H1 (cell line): ENCODE measurements at regions of chr9 and their contacts with region 1.

Region 1: GRCh38 chr9:106286249-106286648 is 576.7 kb upstream of the ZNF462 start:
- DNase-seq: peak in 1 of 2 experiments; percentile 17
- H3K4me3 ChIP-seq: no peak overlapping the region
- H3K27ac ChIP-seq: no peak overlapping the region
- H3K4me1 ChIP-seq: peaks cover 0 to 2% (median 0%) of the 10 kb centered on the region in 4 experiments; a peak in 2 of 7 replicates
- H3K27me3 ChIP-seq: no peaks in the 10 kb centered on the region
- CTCF ChIP-seq: peak in 2 of 3 experiments; percentile 83 to 98; a peak in 3 of 4 replicates
- EP300 ChIP-seq: no peak
- POLR2A ChIP-seq: no peak
- RAD21 ChIP-seq: peak; percentile 87 to 88

Region 2: DNA sequence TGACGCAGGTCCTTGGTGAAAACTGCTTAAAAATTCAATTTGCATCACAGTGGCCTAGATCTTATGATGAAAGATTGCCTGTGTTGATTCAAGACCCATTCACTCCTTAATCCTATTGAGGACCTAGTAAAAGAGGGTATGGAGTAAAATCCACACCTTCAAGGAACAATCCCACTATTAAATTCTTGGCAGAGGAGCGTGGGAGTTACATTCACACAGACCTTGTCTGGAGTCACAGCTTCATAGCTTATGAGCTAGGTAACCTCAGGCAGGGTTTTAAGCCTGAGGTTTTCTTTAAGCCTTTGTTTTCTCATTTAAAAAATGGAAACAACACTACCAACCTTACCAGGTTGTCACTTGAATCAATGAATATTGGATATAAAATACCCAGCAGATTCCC is 10.2 kb after region 1 on chr9:
- CTCF ChIA-PET with region 1: interaction called, 16 read pairs
- POLR2A ChIA-PET with region 1: no interaction called
- DNase-seq: no peak
- H3K4me3 ChIP-seq: no peak overlapping the region
- H3K27ac ChIP-seq: no peak overlapping the region
- H3K4me1 ChIP-seq: no peaks in the 10 kb centered on the region
- H3K27me3 ChIP-seq: no peaks in the 10 kb centered on the region
- CTCF ChIP-seq: no peak
- EP300 ChIP-seq: no peak
- POLR2A ChIP-seq: no peak
- RAD21 ChIP-seq: no peak

Region 3: GRCh38 chr9:106350777-106351176 is 64.5 kb after region 1 on chr9:
- CTCF ChIA-PET with region 1: no interaction called
- POLR2A ChIA-PET with region 1: no interaction called
- DNase-seq: no peak
- H3K4me3 ChIP-seq: no peak overlapping the region
- H3K27ac ChIP-seq: no peak overlapping the region
- H3K4me1 ChIP-seq: no peaks in the 10 kb centered on the region
- H3K27me3 ChIP-seq: no peaks in the 10 kb centered on the region
- CTCF ChIP-seq: no peak
- EP300 ChIP-seq: no peak
- POLR2A ChIP-seq: no peak
- RAD21 ChIP-seq: no peak

Region 4: DNA sequence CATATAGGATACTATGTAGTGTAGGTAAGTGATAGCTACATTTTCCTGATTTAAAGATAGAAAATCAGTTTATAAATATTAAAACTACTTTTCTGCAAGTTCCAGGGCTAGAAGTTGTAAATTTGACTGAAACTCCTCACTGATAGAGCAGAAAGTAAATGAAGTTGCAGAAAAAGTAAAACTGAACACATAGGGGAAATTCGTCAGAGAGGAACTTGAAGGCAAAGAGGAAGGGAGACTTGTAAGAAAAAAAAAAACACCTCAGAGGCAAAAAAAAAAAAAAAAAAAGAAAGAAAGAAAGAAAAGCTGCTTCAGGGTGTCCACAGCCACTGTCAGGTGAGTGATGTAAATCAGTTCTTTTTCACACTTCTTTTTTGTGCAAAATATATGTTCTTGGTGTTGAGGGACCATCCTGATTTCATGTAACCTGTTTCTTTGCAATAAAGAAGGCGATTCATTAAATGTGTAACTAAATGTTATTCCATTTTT is 240.5 kb after region 1 on chr9:
- CTCF ChIA-PET with region 1: no interaction called
- POLR2A ChIA-PET with region 1: no interaction called
- DNase-seq: no peak
- H3K4me3 ChIP-seq: no peak overlapping the region
- H3K27ac ChIP-seq: no peak overlapping the region
- H3K4me1 ChIP-seq: no peaks in the 10 kb centered on the region
- H3K27me3 ChIP-seq: no peaks in the 10 kb centered on the region
- CTCF ChIP-seq: no peak
- EP300 ChIP-seq: no peak
- POLR2A ChIP-seq: no peak
- RAD21 ChIP-seq: no peak